HCT116 (cell line): ENCODE measurements at regions of chr20 and their contacts with region 1.

Region 1: DNA sequence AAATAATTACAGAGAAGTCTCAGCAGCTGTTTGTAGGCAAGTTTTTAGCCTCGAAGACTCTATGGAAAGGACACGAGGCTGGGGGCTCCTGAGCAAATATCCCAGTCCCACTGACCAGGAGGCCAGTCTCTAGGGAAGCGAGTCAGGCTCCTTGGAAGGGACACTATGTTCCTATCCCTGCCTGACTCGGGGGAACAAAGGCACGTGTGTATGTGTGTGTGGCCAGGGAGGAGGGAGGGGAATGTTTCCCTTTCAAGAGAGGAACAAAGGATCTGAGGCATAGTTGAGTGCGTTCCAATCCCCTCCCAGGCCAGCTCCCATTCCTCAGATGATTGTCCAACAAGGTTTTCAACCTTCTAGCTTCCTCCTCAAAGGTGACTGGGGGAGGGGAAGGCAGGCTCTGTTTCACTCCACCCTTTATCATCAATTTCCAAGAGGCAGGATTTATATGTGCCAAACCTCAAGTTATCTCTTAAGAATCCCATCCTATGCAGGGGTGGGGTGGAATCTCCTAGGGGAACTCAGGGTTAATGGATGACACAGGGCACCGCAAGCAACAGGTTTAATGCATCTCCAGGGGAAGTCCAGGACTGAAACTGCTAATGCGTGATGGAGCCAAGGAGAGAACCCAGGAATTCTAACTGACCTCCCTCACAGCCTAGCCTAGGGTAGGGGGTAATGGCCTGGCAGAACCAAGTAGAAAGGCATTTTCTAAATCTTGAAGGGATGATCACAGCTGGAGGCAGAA is 9.9 kb downstream of the BCL2L1 start:
- DNase-seq: peak; percentile 92
- ATAC-seq: peak; percentile 78
- H3K4me3 ChIP-seq: peak overlapping the region; percentile 5 to 46
- H3K27ac ChIP-seq: peak overlapping the region; percentile 98
- H3K4me1 ChIP-seq: peaks cover 91 to 99% of the 10 kb centered on the region in 2 experiments
- H3K27me3 ChIP-seq: no peaks in the 10 kb centered on the region
- CTCF ChIP-seq: no peak
- POLR2A ChIP-seq: no peak
- RAD21 ChIP-seq: no peak

Region 2: GRCh38 chr20:31661625-31662371 is 50.9 kb before region 1 on chr20:
- CTCF ChIA-PET with region 1: interaction called, 12 read pairs
- POLR2A ChIA-PET with region 1: interaction called, 4 read pairs
- RAD21 ChIA-PET with region 1: no interaction called
- intact Hi-C with region 1: no loop called
- DNase-seq: peak; percentile 40
- ATAC-seq: peak; percentile 75
- H3K4me3 ChIP-seq: peak overlapping the region; percentile 2 to 12; a peak in 2 of 4 replicates
- H3K27ac ChIP-seq: peak overlapping the region; percentile 53
- H3K4me1 ChIP-seq: peaks cover 43 to 62% of the 10 kb centered on the region in 2 experiments
- H3K27me3 ChIP-seq: no peaks in the 10 kb centered on the region
- CTCF ChIP-seq: peak; percentile 60 to 71 (median 67)
- POLR2A ChIP-seq: no peak
- RAD21 ChIP-seq: peak; percentile 72

Region 3: DNA sequence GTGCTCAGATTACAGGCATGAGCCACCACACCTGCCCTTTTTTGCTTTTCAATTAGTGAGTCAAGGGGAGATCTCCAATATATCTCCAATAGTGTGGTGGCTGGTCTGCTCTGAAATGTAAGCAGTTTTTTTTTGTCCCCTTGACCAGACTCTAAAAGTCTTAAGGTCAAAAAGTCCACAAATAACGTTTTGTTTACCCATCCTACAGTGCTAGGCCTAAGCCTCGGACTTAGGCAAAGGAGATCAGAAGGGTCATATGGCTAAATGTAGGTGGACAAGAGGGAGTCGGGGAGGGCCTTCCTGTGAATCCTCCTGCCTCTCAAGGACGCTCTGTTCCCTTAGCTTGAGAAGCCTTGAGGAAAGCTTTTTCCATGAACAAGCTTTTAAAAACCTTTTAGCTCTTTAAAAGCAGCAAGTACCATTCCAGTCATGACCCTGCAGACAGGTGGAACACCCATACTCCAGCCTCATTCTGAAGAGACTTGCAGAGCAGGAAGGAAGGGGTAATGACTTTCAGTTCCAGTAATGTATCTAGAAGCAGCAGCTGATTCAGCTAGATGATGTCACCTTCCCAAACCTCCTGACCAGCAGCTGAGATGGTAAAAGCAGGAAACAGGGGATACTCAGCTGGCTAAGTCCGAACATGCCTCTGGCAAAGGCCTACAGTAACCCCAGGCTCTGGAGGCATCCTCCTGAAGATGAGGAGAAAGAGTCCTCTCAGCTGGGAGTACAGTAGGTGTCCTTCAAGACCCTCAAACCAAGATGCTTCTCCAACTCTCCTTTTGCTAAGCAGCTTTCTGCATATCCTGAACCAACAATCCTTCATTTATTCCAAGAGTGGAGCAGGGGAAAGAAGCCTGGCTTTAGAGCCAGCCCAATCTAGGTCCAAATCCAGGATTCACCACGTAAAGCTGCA is 13.7 kb before region 1 on chr20:
- CTCF ChIA-PET with region 1: interaction called, 3 read pairs
- POLR2A ChIA-PET with region 1: interaction called, 40 read pairs
- RAD21 ChIA-PET with region 1: no interaction called
- intact Hi-C with region 1: loop called (anchors 1 kb)
- DNase-seq: peak; percentile 44
- ATAC-seq: no peak
- H3K4me3 ChIP-seq: peak overlapping the region in 1 of 2 experiments; percentile 10; a peak in 1 of 4 replicates
- H3K27ac ChIP-seq: peak overlapping the region; percentile 81
- H3K4me1 ChIP-seq: peaks cover 83 to 99% of the 10 kb centered on the region in 2 experiments
- H3K27me3 ChIP-seq: no peaks in the 10 kb centered on the region
- CTCF ChIP-seq: no peak
- POLR2A ChIP-seq: no peak
- RAD21 ChIP-seq: no peak